ENCODE measurements at regions of chr13 and their contacts with region 1.

Region 1: GRCh38 chr13:33285420-33286124 is at the start of gene STARD13:
- DNase-seq: peak; percentile 95
- ATAC-seq: peak; percentile 97
- total RNA-seq, gene STARD13: 26.8 to 33.3 TPM

Region 2: DNA sequence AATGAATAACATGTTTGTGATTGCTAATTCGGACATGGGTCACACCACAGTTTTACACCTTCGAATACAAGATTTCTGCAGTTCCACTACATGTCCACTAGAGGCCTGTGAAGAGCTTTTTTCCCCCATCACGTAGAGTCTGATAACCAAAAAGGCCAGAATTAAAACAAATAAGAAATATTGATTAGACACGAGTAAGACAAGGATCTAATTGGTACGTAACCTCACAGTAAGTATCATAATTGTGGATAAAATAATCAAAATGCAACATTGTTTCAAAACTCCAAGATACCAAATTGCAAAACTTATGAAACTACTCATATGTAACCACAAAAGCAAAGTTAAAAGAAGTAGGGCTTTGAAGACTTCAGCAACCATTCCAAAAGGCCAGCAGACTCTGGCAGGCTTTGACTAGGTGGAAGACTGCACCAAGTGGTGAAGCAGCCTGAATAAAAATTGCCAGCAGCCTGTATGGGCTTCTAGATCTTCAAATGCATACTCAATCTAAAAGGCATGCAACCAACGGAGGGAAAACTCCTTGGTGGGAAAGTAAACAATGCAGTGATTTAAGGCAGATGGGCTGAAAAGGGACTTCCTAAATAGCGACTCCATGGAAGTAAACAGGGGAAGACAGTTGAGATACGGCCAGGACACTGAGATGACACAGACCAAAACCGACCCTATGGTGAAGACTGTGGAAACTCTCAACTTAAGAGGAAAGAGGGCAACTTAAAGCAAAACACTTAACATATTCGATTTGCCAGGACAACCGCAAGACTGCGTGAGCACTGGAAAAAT is 56.7 kb before region 1 on chr13:
- intact Hi-C with region 1: loop called (anchors 5 to 10 kb)
- DNase-seq: no peak
- ATAC-seq: peak; percentile 39 to 68

Region 3: GRCh38 chr13:33542283-33543088 is 256.9 kb after region 1 on chr13:
- intact Hi-C with region 1: loop called in 1 of 2 experiments (anchors 5 kb)
- DNase-seq: peak; percentile 99
- ATAC-seq: peak; percentile 93 to 96

Region 4: DNA sequence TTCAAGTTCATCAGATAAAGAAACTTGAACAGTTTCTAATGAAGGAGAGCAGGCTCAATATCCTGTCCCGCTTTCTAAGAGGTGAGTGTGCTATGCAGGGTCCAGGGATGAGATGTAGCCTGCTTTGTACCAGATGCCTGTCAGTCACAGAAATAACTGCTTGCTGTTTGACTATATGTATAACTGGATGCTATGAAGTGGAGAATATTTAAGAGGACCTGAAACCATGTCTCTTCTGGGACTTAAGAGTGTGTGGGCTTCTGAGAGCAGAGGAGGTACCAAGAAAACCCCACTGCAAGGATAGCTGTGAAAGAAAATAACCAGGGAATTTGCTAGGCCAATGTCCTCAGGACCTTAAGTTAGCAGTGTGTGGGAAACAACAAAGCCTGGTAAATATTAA is 286.0 kb after region 1 on chr13:
- intact Hi-C with region 1: no loop called
- DNase-seq: no peak
- ATAC-seq: no peak